WTC11 (cell line): ENCODE measurements at regions of chr10 and their contacts with region 1.

Region 1: GRCh38 chr10:114304017-114304570 is 65.0 kb downstream of the VWA2 start:
- DNase-seq: peak; percentile 83
- ATAC-seq: peak; percentile 35
- H3K4me3 Mint-ChIP-seq: peak overlapping the region; percentile 74
- H3K27ac Mint-ChIP-seq: no peak overlapping the region
- H3K4me1 Mint-ChIP-seq: peaks cover 5% of the 10 kb centered on the region
- H3K27me3 Mint-ChIP-seq: 0 out of 2 replicates have a peak, but pooled peaks cover 3% of the 10 kb centered on the region
- CTCF ChIP-seq: peak; percentile 76

Region 2: DNA sequence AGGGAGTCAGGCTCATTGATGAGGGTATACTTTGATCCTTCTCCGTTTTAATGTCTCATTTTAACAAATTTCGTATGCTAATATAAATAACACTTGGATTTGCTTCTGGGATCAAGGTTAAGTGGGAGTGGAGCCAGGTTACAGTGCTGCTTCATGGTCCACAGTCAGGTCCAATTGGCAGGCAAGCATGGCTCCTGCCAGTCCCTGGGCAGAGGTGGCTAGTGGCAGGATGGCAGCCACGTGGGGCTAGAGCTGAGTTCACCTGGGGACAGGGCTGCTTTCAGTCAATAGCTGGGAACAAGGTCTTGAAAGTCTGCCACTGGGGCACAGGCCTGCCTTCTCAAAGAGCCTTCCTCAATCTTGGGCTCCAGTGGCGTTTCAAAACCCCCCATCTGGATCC is 81.0 kb before region 1 on chr10:
- CTCF ChIA-PET with region 1: no interaction called
- POLR2A ChIA-PET with region 1: no interaction called
- DNase-seq: no peak
- ATAC-seq: no peak
- H3K4me3 Mint-ChIP-seq: no peak overlapping the region
- H3K27ac Mint-ChIP-seq: no peak overlapping the region
- H3K4me1 Mint-ChIP-seq: no peaks in the 10 kb centered on the region
- H3K27me3 Mint-ChIP-seq: no peaks in the 10 kb centered on the region
- CTCF ChIP-seq: no peak

Region 3: GRCh38 chr10:114337505-114338462 is 33.7 kb after region 1 on chr10:
- CTCF ChIA-PET with region 1: interaction called, 25 read pairs
- POLR2A ChIA-PET with region 1: no interaction called
- DNase-seq: peak; percentile 57
- ATAC-seq: peak; percentile 84
- H3K4me3 Mint-ChIP-seq: no peak overlapping the region
- H3K27ac Mint-ChIP-seq: peak overlapping the region; percentile 79
- H3K4me1 Mint-ChIP-seq: peaks cover 37% of the 10 kb centered on the region
- H3K27me3 Mint-ChIP-seq: no peaks in the 10 kb centered on the region; the same call in 1 of the 2 replicates
- CTCF ChIP-seq: no peak

Region 4: GRCh38 chr10:114403541-114404161 is 99.6 kb after region 1 on chr10:
- CTCF ChIA-PET with region 1: interaction called, 106 read pairs
- POLR2A ChIA-PET with region 1: interaction called, 5 read pairs
- DNase-seq: peak; percentile 66
- ATAC-seq: peak; percentile 68
- H3K4me3 Mint-ChIP-seq: peak overlapping the region; percentile 88
- H3K27ac Mint-ChIP-seq: no peak overlapping the region
- H3K4me1 Mint-ChIP-seq: peaks cover 33% of the 10 kb centered on the region
- H3K27me3 Mint-ChIP-seq: peaks cover 62% of the 10 kb centered on the region
- CTCF ChIP-seq: no peak

Region 5: DNA sequence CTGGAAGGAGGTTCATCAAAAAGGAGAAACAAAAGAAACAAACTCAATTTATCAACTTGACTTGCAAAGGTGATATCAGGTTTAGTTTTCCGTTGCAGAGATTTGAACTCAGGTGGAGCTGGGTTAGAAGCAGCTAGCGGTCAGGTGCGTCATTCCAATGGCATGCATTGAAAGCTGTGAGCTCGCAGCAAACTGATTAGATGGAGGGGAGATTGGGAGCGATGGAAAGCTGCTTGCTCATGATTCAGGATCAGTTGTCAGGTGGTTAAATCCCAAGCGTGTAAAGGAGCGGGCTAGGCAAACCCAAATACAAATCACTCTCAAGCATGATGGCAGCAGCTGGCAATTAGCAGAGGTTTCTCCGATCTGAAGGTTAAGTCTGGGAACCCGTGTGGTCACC is 149.5 kb after region 1 on chr10:
- CTCF ChIA-PET with region 1: interaction called, 126 read pairs
- POLR2A ChIA-PET with region 1: no interaction called
- DNase-seq: no peak
- ATAC-seq: no peak
- H3K4me3 Mint-ChIP-seq: no peak overlapping the region
- H3K27ac Mint-ChIP-seq: no peak overlapping the region
- H3K4me1 Mint-ChIP-seq: peaks cover 16% of the 10 kb centered on the region
- H3K27me3 Mint-ChIP-seq: no peaks in the 10 kb centered on the region
- CTCF ChIP-seq: no peak

Region 6: DNA sequence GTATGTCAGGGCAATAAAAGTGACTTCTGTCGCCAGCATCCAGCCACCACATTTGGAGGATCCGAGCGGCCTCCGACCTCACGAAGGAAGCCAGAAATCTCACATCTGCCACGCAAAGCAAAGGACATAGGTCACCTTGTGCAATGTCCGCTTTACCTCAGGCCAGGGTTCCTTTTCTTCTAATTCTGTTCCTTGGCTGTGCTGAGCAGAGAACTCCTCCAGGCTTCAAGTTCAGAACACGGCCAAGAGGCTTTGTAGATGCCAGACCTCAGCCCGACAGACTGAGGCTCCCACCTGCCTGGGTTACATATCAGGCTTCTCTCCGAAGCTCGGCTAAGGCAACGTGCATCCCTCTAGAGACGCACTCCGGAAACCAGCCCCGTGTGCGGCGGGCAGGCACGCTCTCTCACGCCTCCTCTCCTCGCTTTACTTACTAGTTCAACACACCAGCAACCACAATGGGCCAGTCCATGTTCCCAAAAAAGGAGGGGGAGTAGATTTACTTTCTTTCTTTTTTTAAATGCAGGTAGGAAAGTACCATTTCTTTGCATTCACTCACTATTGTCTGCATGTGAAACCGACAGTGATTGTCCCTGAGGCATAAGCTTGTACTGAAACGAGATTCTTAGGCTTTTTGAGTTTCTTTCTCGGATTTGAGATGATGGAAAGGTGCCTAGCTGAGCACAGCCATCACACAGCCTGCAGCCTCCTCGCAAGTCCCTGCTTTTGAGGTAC is 222.6 kb after region 1 on chr10:
- CTCF ChIA-PET with region 1: interaction called, 16 read pairs
- POLR2A ChIA-PET with region 1: no interaction called
- DNase-seq: peak; percentile 83
- ATAC-seq: peak; percentile 93
- H3K4me3 Mint-ChIP-seq: peak overlapping the region; percentile 81
- H3K27ac Mint-ChIP-seq: peak overlapping the region; percentile 87
- H3K4me1 Mint-ChIP-seq: peaks cover 57% of the 10 kb centered on the region
- H3K27me3 Mint-ChIP-seq: no peaks in the 10 kb centered on the region
- CTCF ChIP-seq: no peak

Region 7: DNA sequence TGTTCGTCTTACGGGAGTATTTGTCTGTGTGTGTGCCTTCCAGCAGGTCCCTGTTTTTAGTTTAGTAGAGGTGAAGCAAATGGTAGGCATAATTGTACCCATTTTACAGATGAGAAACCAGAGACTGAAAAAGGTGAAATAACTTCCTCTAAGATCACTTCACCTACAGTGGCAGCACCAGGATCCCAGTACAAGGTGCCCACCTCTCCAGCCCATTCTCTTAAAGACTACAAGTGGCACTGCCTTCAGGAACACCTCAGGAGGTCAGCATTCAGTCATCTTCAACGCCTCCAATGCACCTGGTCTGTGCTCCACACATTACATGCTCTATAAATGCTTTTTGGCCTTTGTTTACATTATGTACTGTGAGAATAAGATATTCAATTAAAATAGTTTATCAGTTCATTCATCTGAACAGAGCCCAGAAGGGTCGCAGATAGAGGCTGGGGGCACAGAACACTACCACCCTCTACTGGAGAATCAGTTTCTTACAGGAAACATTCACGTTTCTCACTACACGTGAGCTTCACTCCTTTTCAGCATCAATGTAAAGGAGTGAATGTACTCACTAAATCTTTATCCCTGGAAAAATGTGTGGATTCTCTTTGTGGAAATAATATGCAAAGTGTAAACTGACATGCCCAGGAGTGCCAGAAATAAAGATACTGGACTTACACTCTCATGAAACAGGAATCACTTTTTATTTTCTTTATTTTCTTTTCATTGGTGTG is 399.4 kb after region 1 on chr10:
- CTCF ChIA-PET with region 1: interaction called, 12 read pairs
- POLR2A ChIA-PET with region 1: no interaction called
- DNase-seq: no peak
- ATAC-seq: peak; percentile 93
- H3K4me3 Mint-ChIP-seq: no peak overlapping the region
- H3K27ac Mint-ChIP-seq: no peak overlapping the region
- H3K4me1 Mint-ChIP-seq: peaks cover 6% of the 10 kb centered on the region; the same call in 1 of the 2 replicates
- H3K27me3 Mint-ChIP-seq: peaks cover 3% of the 10 kb centered on the region
- CTCF ChIP-seq: peak; percentile 62